ENCODE measurements at regions of chr12 and their contacts with region 1.

Region 1: DNA sequence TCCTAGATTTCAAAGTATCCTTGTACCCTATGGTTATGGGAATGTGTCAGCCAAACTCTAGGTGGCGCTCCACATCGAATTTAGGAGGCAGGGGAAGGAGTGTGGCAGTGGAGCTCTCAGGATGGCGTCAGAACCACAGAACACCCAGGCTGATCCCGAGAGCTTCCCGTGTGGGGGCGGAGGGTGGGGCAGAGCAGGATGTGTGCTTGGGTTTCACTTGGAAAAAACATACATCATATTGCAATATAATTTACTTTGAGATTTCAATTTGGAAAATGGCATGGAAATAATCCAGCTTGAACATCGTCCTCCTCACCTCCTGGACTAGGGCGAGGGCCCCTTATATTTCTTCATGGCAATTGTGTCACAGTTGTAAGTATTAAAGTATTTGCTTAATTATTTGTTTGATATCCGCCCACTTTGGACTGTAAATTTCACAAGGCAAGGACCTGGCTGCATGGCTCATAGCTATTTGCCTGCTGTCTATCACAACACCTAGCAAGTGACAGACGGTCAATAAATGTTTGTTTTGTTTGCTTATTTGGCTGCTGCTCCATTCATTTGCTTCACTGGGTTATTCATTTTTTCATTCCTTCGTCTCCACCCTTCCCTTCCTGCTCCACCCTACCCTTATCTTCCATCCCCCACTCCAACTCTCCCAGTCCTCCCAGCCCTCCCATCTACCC is 221.5 kb upstream of the HMGA2 start:
- H3K4me3 ChIP-seq: peak overlapping the region; percentile 24
- H3K27ac ChIP-seq: peak overlapping the region; percentile 65
- H3K4me1 ChIP-seq: peaks cover 20% of the 10 kb centered on the region
- CTCF ChIP-seq: peak; percentile 80

Region 2: DNA sequence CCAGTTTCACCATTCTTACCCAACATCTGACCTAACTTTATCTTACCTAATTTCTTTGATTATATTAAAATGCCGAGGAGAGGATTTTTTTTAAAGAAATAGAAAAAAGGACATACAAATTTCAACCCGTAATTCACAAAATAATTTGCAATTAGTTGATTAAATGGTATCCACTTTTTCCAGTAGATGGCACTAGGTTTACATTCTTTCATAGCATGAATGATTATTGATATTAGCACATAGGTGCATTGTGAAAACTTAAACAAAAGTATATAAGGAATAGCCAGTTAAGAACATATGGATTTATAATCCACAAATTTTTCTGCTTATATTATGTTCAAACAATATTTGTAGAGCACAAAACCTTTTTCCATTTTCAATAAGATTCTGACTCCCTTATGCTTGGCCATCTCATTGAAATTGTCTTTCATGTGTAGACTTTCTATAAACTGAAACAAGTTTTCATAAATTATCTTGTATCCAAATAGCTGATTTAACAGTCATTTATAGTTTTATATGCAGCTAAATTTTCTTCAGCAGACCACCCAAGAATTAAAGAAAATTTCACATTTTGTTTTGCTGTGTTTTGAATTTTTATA is 288.9 kb before region 1 on chr12:
- CTCF ChIA-PET with region 1: interaction called, 10 read pairs
- POLR2A ChIA-PET with region 1: no interaction called
- H3K4me3 ChIP-seq: no peak overlapping the region
- H3K27ac ChIP-seq: no peak overlapping the region
- H3K4me1 ChIP-seq: no peaks in the 10 kb centered on the region
- CTCF ChIP-seq: peak; percentile 45; the same call in 1 of the 2 replicates

Region 3: GRCh38 chr12:65556681-65557437 is 45.9 kb before region 1 on chr12:
- CTCF ChIA-PET with region 1: interaction called, 13 read pairs
- POLR2A ChIA-PET with region 1: no interaction called
- H3K4me3 ChIP-seq: no peak overlapping the region
- H3K27ac ChIP-seq: no peak overlapping the region
- H3K4me1 ChIP-seq: no peaks in the 10 kb centered on the region
- CTCF ChIP-seq: peak; percentile 81

Region 4: DNA sequence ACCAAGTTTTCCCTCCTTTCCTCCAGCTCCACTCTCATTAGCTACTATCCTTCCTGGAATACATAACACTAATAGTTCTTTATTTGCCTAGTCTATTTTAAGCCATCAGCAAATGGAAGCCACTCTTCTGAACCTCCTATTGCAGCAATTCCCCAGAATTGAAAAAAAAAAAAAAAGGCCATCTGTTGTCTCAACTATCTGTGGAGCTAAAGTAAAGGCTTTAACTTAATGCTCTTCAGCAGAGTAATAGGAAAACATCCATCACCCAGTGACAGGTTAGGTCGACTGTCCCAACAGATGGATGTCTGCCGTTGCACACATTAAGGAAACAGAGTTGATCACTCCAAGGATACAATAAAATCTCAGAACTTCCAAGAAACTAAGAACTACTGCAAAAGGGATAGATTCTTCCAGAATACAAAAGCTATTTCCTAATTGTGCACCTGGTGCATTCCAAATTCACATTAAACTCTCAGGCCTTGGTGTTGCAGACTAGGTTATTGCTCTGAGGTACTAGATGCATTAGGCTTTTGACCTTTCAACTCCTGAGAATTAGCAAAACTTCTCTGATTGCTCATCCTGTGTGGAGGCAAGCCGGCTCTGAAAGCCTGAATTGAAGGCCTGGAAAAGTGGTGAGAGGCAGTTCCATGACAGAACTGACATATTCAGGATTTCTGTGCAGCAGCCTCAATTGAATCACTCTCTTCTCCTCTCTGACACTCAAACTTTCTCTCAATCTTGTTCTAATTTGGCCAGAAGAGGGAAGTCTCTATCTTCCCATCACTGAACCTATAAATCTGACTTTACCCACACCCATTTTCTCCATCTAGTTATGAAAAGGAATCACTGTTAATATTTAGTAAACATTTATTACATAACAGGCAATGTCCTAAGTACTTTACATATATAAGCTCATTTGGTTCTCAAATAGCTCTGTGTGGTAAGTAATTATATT is 16.8 kb before region 1 on chr12:
- CTCF ChIA-PET with region 1: interaction called, 10 read pairs
- POLR2A ChIA-PET with region 1: no interaction called
- H3K4me3 ChIP-seq: no peak overlapping the region
- H3K27ac ChIP-seq: no peak overlapping the region
- H3K4me1 ChIP-seq: peaks cover 3% of the 10 kb centered on the region
- CTCF ChIP-seq: peak; percentile 57; the same call in 1 of the 2 replicates

Region 5: DNA sequence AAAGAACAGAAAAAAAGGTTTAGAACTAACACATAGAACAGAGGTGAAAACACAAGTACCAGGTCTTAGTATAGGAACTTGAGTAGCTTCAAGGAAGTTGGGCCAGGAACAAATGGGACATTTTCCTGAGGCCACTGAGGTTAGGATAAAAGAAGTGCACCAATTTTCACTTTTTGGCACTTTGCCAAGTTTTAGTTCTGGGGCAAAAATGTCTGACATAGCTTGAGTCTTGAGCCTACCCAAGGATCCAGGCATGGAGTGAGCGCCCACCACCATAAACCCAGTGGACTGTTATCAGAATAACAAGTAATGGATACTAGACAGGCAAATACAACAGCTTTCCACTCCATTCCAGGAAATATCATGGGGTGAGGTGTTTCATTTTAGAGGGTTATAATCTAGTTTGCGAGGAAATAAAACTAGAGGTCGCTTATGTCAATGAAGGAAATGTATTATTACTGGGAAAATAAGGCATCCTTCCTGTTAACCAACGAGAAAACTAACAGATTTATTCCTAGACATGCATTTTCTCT is 21.9 kb after region 1 on chr12:
- CTCF ChIA-PET with region 1: interaction called, 12 read pairs
- POLR2A ChIA-PET with region 1: no interaction called
- H3K4me3 ChIP-seq: no peak overlapping the region
- H3K27ac ChIP-seq: no peak overlapping the region
- H3K4me1 ChIP-seq: peaks cover 7% of the 10 kb centered on the region
- CTCF ChIP-seq: no peak

Region 6: DNA sequence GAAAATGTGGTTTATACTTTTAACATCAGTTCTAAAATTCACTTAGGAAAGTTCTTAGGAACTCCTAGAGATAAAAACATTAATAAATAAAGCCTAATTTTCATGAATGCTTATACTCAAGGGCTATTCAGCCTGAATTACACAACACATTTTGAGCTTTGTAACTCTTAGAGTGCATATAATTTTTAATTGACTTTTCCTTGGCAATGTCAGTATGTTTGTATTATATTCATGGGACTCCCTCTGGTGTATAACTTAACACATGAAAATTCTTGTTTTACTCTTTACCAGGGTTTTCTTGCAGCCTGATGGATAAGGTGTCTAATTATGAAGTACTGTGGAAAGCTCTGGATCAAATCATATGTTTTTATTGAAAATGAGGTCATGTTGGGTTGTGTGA is 71.0 kb after region 1 on chr12:
- CTCF ChIA-PET with region 1: interaction called, 21 read pairs
- POLR2A ChIA-PET with region 1: no interaction called
- H3K4me3 ChIP-seq: no peak overlapping the region
- H3K27ac ChIP-seq: no peak overlapping the region
- H3K4me1 ChIP-seq: no peaks in the 10 kb centered on the region
- CTCF ChIP-seq: peak; percentile 36; the same call in 1 of the 2 replicates

Region 7: DNA sequence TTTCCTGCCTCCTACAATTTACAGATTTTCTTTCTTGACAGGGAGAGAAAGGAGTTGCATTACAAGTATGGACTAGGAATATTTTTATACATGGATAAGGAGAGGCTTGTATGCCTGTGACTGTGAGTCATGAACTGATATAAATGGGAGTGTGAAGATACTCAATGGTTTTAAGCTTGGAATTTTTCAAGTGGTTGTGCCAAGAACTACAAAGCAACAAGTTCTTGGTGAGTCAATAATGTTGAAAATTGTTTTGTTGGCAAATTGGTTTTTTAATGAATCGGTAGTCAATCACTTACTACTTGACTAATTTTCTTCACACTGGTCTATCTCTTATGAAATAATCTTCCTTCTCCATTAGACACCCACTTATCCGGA is 162.7 kb after region 1 on chr12:
- CTCF ChIA-PET with region 1: no interaction called
- POLR2A ChIA-PET with region 1: no interaction called
- H3K4me3 ChIP-seq: no peak overlapping the region
- H3K27ac ChIP-seq: no peak overlapping the region
- H3K4me1 ChIP-seq: no peaks in the 10 kb centered on the region
- CTCF ChIP-seq: no peak

Region 8: DNA sequence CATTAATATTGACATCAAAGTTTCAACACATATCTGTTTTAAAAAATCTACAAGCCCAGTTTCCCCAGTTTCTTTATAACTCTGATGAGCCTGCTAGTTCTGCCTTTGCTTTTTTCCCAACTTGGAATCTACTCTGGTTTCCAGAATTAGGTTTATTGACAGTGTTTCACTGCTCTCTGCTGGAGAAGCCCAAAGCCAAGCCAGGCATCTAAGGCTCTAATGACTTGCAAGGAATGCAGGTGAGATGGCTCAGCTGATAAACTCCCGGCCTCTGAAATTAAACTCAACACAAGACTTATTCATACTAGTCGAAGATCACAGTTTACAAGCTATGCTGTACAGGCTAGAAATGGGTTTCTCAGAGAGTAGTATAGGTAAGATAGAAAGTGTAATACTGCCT is 275.8 kb after region 1 on chr12:
- CTCF ChIA-PET with region 1: interaction called, 11 read pairs
- POLR2A ChIA-PET with region 1: no interaction called
- H3K4me3 ChIP-seq: no peak overlapping the region
- H3K27ac ChIP-seq: no peak overlapping the region
- H3K4me1 ChIP-seq: peaks cover 50% of the 10 kb centered on the region
- CTCF ChIP-seq: peak; percentile 22; the same call in 1 of the 2 replicates